ENCODE measurements at regions of chr2 and their contacts with region 1.

Region 1: DNA sequence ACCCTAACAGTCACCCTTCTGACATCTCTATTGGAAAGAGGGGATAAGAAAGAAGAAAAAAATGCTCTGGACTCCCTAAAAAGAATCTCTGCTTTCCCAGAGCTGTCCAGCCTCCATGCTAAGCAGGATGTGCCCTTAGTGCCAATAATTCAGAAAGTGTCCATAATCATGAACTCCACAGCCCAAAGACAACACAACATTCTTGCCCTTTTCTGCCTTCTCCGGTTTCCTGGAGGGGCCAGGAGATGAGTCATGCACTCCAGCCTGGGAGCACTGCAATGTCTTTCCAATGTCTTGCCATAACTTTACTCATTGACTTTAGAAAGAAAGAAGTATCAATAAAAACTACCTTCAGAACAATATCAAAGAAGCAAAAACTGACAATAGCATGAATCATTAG is 44.0 kb downstream of the KLF7 start:
- DNase-seq: no peak
- H3K4me3 Mint-ChIP-seq: no peak overlapping the region
- H3K27ac Mint-ChIP-seq: no peak overlapping the region
- H3K4me1 Mint-ChIP-seq: peaks cover 58% of the 10 kb centered on the region
- H3K27me3 Mint-ChIP-seq: no peaks in the 10 kb centered on the region

Region 2: DNA sequence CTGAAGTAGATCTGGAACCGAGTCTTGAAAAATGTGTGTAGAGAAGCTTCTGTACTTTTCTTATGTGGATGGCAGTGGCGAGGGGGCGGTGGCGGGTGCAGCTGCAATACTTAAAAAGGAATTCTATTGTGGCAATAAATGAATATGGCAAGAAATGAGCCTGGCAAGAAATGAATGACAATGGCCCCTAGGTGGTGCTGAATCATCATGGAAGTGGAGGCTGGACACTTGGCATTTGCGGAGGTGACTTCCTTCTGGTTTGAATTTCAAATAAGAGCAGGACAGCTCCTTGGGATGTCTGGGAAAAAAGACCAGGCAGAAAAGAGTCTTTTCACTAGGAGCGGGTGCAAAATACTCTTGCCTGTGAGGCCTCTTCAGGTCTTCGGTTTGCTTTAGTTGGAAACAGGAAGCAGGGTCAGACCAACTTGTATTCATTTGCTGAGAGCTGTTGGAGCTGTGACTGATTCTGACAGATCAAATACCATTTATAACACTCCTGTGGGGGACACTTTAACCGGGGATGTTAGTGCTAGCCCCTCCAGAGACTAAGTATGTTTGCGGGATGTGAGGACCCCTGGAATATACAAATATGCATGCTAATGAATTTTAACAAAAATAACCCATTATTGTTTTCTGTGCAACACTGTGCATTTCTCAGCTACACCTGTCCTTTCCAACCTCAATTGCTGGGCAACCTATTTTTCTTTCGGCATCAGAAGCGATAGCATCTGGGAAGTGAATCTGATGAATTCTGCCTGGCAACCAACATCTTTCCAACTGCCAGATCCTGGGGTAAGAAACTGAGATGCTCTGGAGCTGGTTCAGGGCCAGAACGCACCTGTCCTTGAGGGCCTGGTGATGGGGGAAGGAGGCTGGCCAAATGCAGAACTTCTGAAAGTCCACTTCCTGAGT is 321.0 kb before region 1 on chr2:
- CTCF ChIA-PET with region 1: interaction called, 3 read pairs
- intact Hi-C with region 1: loop called (anchors 2 kb)
- DNase-seq: peak; percentile 70
- H3K4me3 Mint-ChIP-seq: no peak overlapping the region
- H3K27ac Mint-ChIP-seq: no peak overlapping the region
- H3K4me1 Mint-ChIP-seq: peaks cover 31% of the 10 kb centered on the region
- H3K27me3 Mint-ChIP-seq: no peaks in the 10 kb centered on the region

Region 3: GRCh38 chr2:207073801-207074678 is 47.7 kb before region 1 on chr2:
- CTCF ChIA-PET with region 1: interaction called, 3 read pairs
- intact Hi-C with region 1: loop called (anchors 1 kb)
- DNase-seq: peak; percentile 72
- H3K4me3 Mint-ChIP-seq: peak overlapping the region; percentile 64
- H3K27ac Mint-ChIP-seq: peak overlapping the region; percentile 85
- H3K4me1 Mint-ChIP-seq: peaks cover 27% of the 10 kb centered on the region
- H3K27me3 Mint-ChIP-seq: no peaks in the 10 kb centered on the region

Region 4: DNA sequence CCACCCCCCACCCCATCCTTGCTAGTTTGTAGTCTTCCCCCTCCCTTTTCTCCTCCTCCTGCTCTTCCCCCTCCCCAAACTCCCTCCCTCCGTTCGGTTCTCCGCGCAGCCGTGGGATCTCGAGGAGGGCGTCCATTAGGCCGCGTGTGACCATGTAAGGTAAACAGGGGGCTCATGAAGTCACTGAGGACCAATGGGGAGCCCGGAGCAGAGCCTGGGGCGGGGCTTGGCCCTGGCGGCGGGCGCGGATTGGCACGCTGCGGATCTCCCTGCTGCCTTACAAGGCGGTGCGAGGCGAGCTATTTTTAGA is 44.2 kb after region 1 on chr2:
- CTCF ChIA-PET with region 1: interaction called, 9 read pairs
- intact Hi-C with region 1: loop called (anchors 1 kb)
- DNase-seq: peak; percentile 98
- H3K4me3 Mint-ChIP-seq: peak overlapping the region; percentile 95
- H3K27ac Mint-ChIP-seq: peak overlapping the region; percentile 96
- H3K4me1 Mint-ChIP-seq: peaks cover 43% of the 10 kb centered on the region
- H3K27me3 Mint-ChIP-seq: no peaks in the 10 kb centered on the region

Region 5: GRCh38 chr2:207288628-207289027 is 166.8 kb after region 1 on chr2:
- CTCF ChIA-PET with region 1: no interaction called
- intact Hi-C with region 1: loop called (anchors 2 kb)
- DNase-seq: peak; percentile 84
- H3K4me3 Mint-ChIP-seq: no peak overlapping the region
- H3K27ac Mint-ChIP-seq: peak overlapping the region; percentile 33
- H3K4me1 Mint-ChIP-seq: peaks cover 73% of the 10 kb centered on the region
- H3K27me3 Mint-ChIP-seq: no peaks in the 10 kb centered on the region

Region 6: DNA sequence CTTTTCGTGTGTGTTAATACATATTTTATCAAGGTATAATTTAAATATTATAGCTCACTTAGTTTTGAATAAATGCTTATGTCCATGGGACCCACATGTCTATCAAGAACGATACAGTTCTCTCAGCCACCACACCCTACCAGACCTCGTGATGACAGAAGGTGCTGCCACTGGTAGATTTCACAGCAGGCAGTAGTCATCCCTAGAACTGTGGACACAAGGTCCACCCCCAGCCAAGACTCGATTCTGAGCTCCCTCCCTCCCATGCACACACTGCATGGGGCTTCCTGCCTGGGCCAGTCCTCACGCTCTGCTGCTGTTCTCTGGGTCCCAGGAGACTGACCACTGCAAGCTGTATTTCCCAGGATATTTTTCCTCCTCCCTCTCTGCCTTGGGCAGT is 381.4 kb after region 1 on chr2:
- CTCF ChIA-PET with region 1: no interaction called
- intact Hi-C with region 1: loop called (anchors 1 kb)
- DNase-seq: no peak
- H3K4me3 Mint-ChIP-seq: no peak overlapping the region
- H3K27ac Mint-ChIP-seq: no peak overlapping the region
- H3K4me1 Mint-ChIP-seq: peaks cover 47% of the 10 kb centered on the region
- H3K27me3 Mint-ChIP-seq: no peaks in the 10 kb centered on the region

Measured in activated naive CD4-positive, alpha-beta T cell treated with anti-CD3 and anti-CD28 coated beads for 36 hours (primary cell).